HepG2 (cell line): ENCODE measurements at regions of chr13 and their contacts with region 1.

Region 1: GRCh38 chr13:44917589-44918325 is 71.5 kb downstream of the NUFIP1 start:
- DNase-seq: peak; percentile 92
- ATAC-seq: peak; percentile 78
- H3K4me3 ChIP-seq: peak overlapping the region; percentile 61 to 74 (median 63)
- H3K27ac ChIP-seq: peak overlapping the region; percentile 83
- H3K4me1 ChIP-seq: peaks cover 41% of the 10 kb centered on the region
- H3K27me3 ChIP-seq: no peaks in the 10 kb centered on the region; a peak in 1 of 5 replicates
- CTCF ChIP-seq: no peak
- EP300 ChIP-seq: peak in 1 of 2 experiments; percentile 23; a peak in 1 of 4 replicates
- POLR2A ChIP-seq: no peak
- RAD21 ChIP-seq: peak; percentile 41; the same call in 1 of the 2 replicates

Region 2: DNA sequence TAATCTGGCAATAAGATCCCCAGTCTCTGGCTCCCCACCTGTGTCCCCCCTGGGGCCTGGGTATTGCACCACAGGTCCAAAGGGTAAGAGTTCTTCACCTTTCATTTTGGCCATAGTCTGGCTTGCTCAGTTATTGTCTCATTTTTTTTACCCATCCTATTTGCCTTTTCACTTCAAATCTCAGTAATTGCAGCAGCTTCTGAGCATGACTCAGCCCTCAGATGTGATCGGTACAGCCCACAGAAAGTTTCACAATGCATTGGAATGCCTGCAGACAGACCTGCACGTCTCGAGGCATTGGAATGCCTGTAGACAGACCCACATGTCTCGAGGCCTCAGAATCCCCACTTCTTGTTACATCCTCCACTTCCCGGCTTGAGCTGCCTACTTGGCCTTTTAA is 102.1 kb before region 1 on chr13:
- CTCF ChIA-PET with region 1: no interaction called
- POLR2A ChIA-PET with region 1: no interaction called
- in situ Hi-C with region 1: no loop called
- intact Hi-C with region 1: loop called (anchors 5 kb)
- DNase-seq: peak; percentile 92
- ATAC-seq: peak; percentile 98
- H3K4me3 ChIP-seq: no peak overlapping the region
- H3K27ac ChIP-seq: no peak overlapping the region
- H3K4me1 ChIP-seq: peaks cover 31% of the 10 kb centered on the region
- H3K27me3 ChIP-seq: no peaks in the 10 kb centered on the region
- CTCF ChIP-seq: no peak
- EP300 ChIP-seq: peak in 1 of 2 experiments; percentile 73; a peak in 3 of 4 replicates
- POLR2A ChIP-seq: no peak
- RAD21 ChIP-seq: no peak

Region 3: GRCh38 chr13:44969551-44970484 is 52.1 kb after region 1 on chr13:
- CTCF ChIA-PET with region 1: interaction called, 7 read pairs
- POLR2A ChIA-PET with region 1: no interaction called
- in situ Hi-C with region 1: no loop called
- intact Hi-C with region 1: loop called (anchors 1 kb)
- DNase-seq: peak; percentile 49
- ATAC-seq: peak; percentile 69
- H3K4me3 ChIP-seq: no peak overlapping the region
- H3K27ac ChIP-seq: no peak overlapping the region
- H3K4me1 ChIP-seq: peaks cover 16% of the 10 kb centered on the region
- H3K27me3 ChIP-seq: no peaks in the 10 kb centered on the region
- CTCF ChIP-seq: peak; percentile 72
- EP300 ChIP-seq: no peak
- POLR2A ChIP-seq: no peak
- RAD21 ChIP-seq: 0 out of 2 replicates have a peak, but pooled peaks have one; percentile 26

Region 4: DNA sequence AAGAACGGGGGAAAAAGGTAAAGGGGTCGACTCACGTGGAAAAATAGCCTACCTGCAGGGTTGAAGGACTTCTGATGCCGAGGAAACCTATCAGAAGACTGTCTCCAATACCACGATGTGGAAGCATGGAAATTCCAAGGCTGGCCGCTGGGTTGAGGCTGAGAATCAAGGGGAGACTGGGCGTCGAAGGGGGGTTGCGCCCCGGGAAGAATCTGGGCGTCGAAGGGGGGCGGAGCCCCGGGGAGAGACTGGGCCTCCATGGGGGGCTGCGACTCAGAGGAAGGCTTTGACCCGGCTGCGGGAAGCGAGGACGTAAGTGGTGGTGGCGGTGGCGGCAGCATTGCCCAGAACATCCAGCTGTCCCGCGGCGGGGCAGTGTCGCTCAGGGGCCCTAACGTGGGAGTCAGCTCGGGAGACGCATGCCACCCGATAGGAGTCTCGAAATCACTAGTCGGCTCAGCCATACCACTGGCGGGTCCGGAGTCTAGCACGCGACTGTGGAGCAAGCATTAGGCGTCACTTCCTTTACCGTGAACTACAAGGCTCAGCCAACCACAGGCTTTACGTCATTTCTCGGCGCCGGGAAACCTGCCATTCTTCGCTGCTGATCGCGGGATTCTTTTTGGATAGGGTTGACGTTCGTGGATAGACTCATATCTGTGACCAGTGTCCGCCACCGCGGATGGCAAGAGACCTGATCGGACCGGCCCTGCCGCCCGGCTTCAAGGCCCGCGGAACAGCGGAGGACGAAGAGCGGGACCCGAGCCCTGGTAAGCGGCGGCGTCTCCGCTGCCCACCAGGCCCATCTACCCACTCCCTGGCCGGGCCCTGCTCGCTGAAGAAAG is 71.4 kb after region 1 on chr13 and contains the starts of genes GPALPP1 and NUFIP1:
- CTCF ChIA-PET with region 1: no interaction called
- POLR2A ChIA-PET with region 1: no interaction called
- in situ Hi-C with region 1: no loop called
- intact Hi-C with region 1: loop called (anchors 5 kb)
- DNase-seq: peak; percentile 93
- ATAC-seq: peak; percentile 98
- H3K4me3 ChIP-seq: peak within 1 kb of the TSS; percentile 87 to 94 (median 94)
- H3K27ac ChIP-seq: peak within 1 kb of the TSS; percentile 92
- H3K4me1 ChIP-seq: peaks cover 26% of the 10 kb centered on the region
- H3K27me3 ChIP-seq: peaks cover 0 to 2% of the 10 kb centered on the region in 2 experiments; a peak in 1 of 5 replicates
- CTCF ChIP-seq: 0 out of 2 replicates have a peak, but pooled peaks have one; percentile 12
- EP300 ChIP-seq: no peak
- POLR2A ChIP-seq: peak; percentile 81 to 96
- RAD21 ChIP-seq: no peak
- total RNA-seq, gene GPALPP1: 23.1 and 34.2 TPM in 2 replicates
- total RNA-seq, gene NUFIP1: 10.3 and 12.0 TPM in 2 replicates